Psoas muscle (tissue), 8 donors: ENCODE measurements at regions of chr5 and their contacts with region 1.

Region 1: GRCh38 chr5:65481635-65482295 is at the start of gene ADAMTS6:
- DNase-seq: peak; percentile 87 to 92
- ATAC-seq: peak; percentile 89 to 96 (median 94)
- H3K4me3 ChIP-seq: peak within 1 kb of the TSS; percentile 67
- H3K27ac ChIP-seq: peak within 1 kb of the TSS; percentile 83
- H3K4me1 ChIP-seq: peaks cover 13% of the 10 kb centered on the region
- H3K27me3 ChIP-seq: no peaks in the 10 kb centered on the region
- CTCF ChIP-seq: no peak
- total RNA-seq, gene ADAMTS6: 0.24 to 0.59 (median 0.30) TPM

Region 2: DNA sequence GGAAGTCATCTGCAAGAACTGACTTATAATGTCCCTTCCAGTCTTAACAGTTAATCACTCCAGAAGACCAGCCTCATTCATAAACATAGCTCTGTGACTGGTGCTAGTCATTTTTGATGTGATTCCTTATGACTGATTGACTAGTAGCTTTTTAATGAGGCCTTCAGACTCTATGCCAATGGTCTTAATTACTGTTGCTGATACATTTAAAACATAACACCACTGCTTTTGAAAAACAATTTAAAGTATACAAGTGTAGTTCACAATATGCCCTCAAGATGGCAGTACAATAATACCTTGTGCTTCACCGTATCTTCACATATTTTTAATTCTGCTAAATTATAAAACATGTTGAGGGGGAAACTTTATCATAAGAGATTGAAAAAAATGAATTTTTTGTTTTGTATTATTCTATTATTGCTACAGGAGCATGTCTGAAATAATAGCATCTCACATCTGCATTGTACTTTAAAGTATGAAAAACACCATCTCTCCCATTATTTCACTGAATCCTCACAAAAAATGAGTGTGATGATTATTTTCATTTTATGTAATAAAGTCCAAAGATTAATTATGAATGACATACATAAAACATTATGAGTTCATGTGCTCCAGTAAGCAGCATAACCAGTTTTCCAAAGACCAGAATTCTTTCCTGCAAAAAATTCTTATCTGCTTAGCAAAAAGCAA is 846.6 kb before region 1 on chr5:
- intact Hi-C with region 1: loop called in 1 of 2 experiments (anchors 5 kb)
- DNase-seq: no peak
- ATAC-seq: peak in 2 of 4 donors; percentile 49 to 59
- H3K4me3 ChIP-seq: no peak overlapping the region
- H3K27ac ChIP-seq: no peak overlapping the region
- H3K4me1 ChIP-seq: no peaks in the 10 kb centered on the region
- H3K27me3 ChIP-seq: peaks cover 0 to 3% (median 0%) of the 10 kb centered on the region in 3 donors
- CTCF ChIP-seq: peak; percentile 89

Region 3: GRCh38 chr5:64811050-64811640 is 670.6 kb before region 1 on chr5:
- intact Hi-C with region 1: loop called (anchors 1 to 5 kb)
- DNase-seq: no peak
- ATAC-seq: peak in 2 of 4 donors; percentile 55 to 81
- H3K4me3 ChIP-seq: no peak overlapping the region
- H3K27ac ChIP-seq: no peak overlapping the region
- H3K4me1 ChIP-seq: no peaks in the 10 kb centered on the region
- H3K27me3 ChIP-seq: no peaks in the 10 kb centered on the region
- CTCF ChIP-seq: peak; percentile 77

Region 4: DNA sequence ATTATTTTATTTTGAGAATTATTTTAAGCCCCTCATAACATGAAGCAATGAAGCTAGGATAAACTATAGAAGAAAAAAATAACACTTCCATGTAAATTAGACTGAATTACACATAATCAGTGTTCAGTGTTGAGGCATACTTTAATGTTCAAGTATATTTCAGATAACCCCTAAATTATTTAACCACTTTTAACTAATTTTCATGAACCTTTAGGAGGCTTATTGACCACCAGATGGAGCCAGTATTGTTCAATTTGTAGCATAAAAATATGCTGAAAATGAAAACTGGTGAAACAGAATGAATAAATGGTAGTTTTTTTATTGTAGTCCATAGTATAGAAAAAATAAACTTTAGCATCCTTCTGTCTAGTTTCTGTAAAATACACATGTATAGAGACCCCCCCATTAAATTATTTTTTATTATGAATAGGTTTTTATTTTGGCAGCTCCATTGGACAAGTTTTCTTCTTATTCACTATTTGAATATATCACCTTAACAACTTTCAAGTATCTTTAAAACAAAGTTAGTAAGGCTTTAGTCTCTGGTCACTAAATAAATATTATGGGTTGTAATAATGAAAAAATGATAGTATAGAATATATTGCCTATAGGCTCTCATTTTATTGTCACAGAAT is 522.9 kb before region 1 on chr5:
- intact Hi-C with region 1: loop called in 1 of 2 experiments (anchors 10 kb)
- DNase-seq: no peak
- ATAC-seq: no peak
- H3K4me3 ChIP-seq: no peak overlapping the region
- H3K27ac ChIP-seq: no peak overlapping the region
- H3K4me1 ChIP-seq: no peaks in the 10 kb centered on the region
- H3K27me3 ChIP-seq: no peaks in the 10 kb centered on the region
- CTCF ChIP-seq: peak; percentile 40

Region 5: DNA sequence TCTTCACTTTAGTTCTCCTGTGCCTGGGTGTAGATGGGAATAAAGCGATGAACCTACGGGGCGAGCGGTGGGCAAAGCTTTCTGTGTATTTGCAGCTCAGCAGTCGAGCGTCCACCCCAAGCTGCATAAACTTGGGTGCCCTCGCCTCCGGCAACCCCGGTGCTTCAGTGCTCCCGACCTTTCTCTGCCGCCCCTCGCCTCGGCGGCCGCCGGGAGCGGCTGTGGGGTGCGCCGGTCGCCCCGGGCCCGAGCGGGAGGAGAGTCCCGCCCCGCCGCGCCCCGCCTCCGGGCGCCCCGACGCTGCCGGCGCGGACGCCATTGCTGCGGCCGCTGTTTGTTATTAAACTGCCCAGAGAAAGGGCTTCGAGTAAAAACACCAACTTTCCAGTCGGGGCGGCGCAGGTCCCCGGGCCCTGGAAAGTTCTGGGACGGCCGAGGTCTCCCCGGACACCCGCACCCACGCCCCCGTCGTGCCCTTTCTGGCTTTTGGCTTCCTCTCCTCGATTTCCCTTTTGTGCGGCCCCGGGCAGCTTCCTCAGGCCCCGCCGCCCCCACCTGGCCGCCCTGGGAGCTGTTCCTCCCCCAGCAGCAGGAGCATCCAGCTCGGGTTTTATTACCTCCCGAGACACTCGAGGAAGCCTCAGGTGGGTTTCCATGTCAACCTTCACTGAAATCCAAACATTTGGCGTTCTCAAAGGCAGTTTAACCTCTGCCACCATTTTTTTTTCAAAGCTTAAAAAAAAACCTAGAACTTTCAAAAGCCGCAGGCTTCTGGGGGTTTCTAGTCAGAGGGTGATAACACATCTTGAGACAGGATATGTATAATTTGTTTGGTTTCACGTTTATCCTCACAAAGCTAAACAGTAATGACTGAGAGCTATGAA is 378.7 kb before region 1 on chr5:
- intact Hi-C with region 1: loop called (anchors 2 to 5 kb)
- DNase-seq: peak; percentile 51 to 71
- ATAC-seq: peak; percentile 57 to 86 (median 73)
- H3K4me3 ChIP-seq: peak overlapping the region; percentile 81
- H3K27ac ChIP-seq: peak overlapping the region; percentile 74
- H3K4me1 ChIP-seq: peaks cover 4% of the 10 kb centered on the region
- H3K27me3 ChIP-seq: no peaks in the 10 kb centered on the region
- CTCF ChIP-seq: peak; percentile 25

Region 6: DNA sequence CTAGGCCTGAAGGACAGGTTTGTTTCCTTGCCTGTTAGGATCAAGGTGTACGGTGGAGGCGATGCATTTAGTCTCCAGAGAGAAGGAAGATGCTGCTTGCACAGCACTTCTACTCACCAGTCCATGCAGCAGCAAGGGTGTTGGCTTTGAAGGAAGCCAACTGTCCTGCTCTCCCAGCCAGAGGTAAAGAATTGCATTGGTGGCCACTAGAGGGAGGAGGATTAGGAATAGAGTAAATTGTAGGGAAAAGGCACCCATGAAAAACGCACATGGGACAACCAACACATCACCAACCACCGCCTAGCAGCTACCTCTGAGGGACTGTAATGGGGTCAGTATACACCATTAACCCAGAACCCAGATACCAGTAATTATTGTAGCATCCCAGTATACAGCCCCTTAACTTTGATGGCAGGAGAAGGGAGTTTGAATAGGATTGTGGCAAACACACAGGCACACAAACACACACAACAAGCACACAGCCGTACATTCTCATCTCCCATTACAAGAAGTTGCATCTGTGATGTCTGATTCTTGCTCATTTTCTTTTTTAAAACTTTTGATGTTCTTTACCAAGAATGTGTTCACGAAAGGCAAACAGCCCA is 267.7 kb before region 1 on chr5:
- intact Hi-C with region 1: loop called in 1 of 2 experiments (anchors 10 kb)
- DNase-seq: no peak
- ATAC-seq: no peak
- H3K4me3 ChIP-seq: no peak overlapping the region
- H3K27ac ChIP-seq: no peak overlapping the region
- H3K4me1 ChIP-seq: no peaks in the 10 kb centered on the region
- H3K27me3 ChIP-seq: no peaks in the 10 kb centered on the region
- CTCF ChIP-seq: peak; percentile 23